Psoas muscle (tissue), 8 donors: ENCODE measurements at regions of chr6 and their contacts with region 1.

Region 1: DNA sequence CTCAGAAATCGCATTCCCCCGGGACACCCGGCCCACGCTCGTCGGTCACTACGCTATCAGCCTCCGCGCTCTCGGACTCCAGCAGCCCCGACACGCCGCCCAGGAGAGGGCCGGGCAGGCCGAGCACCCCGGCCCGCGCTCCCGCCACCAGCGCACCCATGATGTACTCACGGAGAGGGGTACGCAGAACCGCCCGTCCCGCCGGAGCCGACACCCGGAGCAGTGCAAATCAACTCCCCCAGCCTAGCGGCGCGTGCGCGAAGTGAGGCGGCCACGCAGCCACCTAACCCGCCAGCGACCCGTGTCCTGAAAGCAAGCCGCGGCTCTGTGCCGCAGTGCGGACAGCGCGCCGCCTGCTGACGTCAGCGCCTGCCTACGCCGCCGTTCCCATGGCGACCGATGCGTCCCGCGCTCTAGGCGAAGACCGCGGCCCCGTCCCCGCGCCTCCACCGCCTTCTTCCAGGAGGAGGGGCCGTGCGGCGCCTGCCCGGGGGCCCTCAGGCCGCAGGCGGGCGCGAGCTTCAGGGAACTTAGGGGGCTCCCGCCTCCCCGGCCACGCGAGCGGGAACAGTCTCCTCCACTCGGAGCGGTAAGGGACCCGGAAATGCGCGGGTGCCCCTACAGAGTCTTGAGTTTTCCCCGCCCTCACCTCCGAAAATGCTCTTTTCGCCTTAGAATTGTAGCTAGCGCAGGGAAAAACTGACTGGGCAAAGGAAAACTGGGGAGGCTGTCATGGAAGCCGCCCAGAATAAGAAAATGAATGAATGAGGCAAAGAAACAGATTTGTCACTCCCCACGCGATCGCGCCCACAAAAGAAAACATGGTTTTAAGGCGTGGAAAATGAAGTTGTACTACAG is at the start of gene AHI1:
- DNase-seq: peak; percentile 95 to 98
- ATAC-seq: peak; percentile 96 to 98 (median 98)
- H3K4me3 ChIP-seq: peak within 1 kb of the TSS; percentile 89
- H3K27ac ChIP-seq: peak within 1 kb of the TSS; percentile 91
- H3K4me1 ChIP-seq: peaks cover 10% of the 10 kb centered on the region
- H3K27me3 ChIP-seq: no peaks in the 10 kb centered on the region
- CTCF ChIP-seq: no peak
- total RNA-seq, gene AHI1: 6.6 to 14.2 (median 8.5) TPM

Region 2: GRCh38 chr6:135358985-135359384 is 138.7 kb before region 1 on chr6:
- intact Hi-C with region 1: no loop called
- DNase-seq: no peak
- ATAC-seq: no peak
- H3K4me3 ChIP-seq: no peak overlapping the region
- H3K27ac ChIP-seq: no peak overlapping the region
- H3K4me1 ChIP-seq: no peaks in the 10 kb centered on the region
- H3K27me3 ChIP-seq: no peaks in the 10 kb centered on the region
- CTCF ChIP-seq: no peak

Region 3: GRCh38 chr6:135458051-135458450 is 39.6 kb before region 1 on chr6:
- intact Hi-C with region 1: loop called in 1 of 2 experiments (anchors 2 kb)
- DNase-seq: peak in 1 of 2 donors; percentile 45
- ATAC-seq: no peak
- H3K4me3 ChIP-seq: no peak overlapping the region
- H3K27ac ChIP-seq: no peak overlapping the region
- H3K4me1 ChIP-seq: no peaks in the 10 kb centered on the region
- H3K27me3 ChIP-seq: no peaks in the 10 kb centered on the region
- CTCF ChIP-seq: no peak

Region 4: GRCh38 chr6:135861189-135861588 is 363.5 kb after region 1 on chr6:
- intact Hi-C with region 1: loop called in 1 of 2 experiments (anchors 5 kb)
- DNase-seq: no peak
- ATAC-seq: peak in 2 of 4 donors; percentile 21 to 33
- H3K4me3 ChIP-seq: peak overlapping the region; percentile 49
- H3K27ac ChIP-seq: peak overlapping the region; percentile 54
- H3K4me1 ChIP-seq: peaks cover 33% of the 10 kb centered on the region
- H3K27me3 ChIP-seq: no peaks in the 10 kb centered on the region
- CTCF ChIP-seq: no peak

Region 5: DNA sequence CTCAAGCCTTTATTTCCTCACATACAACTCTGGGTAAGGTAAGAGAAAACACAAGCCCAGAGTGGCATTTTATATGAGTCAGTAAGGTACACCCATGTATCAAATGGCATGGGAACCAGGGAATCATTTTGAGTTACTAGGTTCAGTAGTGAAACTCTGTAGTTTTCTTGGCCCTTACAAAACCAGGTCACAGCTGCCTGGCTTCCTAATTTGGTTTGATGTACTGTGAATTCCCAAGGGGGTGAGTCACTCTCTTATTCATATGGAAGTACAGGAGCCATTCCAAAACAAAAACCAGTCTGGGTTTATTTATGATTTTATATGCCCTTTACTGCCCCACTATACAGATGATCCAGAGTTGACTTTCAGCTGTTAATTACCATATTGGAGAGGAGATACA is 424.5 kb after region 1 on chr6:
- intact Hi-C with region 1: loop called in 1 of 2 experiments (anchors 5 kb)
- DNase-seq: no peak
- ATAC-seq: peak; percentile 93 to 97 (median 96)
- H3K4me3 ChIP-seq: peak overlapping the region; percentile 28
- H3K27ac ChIP-seq: peak overlapping the region; percentile 66
- H3K4me1 ChIP-seq: peaks cover 47% of the 10 kb centered on the region
- H3K27me3 ChIP-seq: no peaks in the 10 kb centered on the region
- CTCF ChIP-seq: no peak